Activated CD4-positive, alpha-beta T cell treated with anti-CD3 and anti-CD28 coated beads for 36 hours (primary cell): ENCODE measurements at regions of chrX and their contacts with region 1.

Region 1: GRCh38 chrX:130165703-130166502 is at the start of gene AIFM1:
- DNase-seq: peak; percentile 92
- ATAC-seq: peak; percentile 95
- H3K4me3 Mint-ChIP-seq: peak within 1 kb of the TSS; percentile 86
- H3K27ac Mint-ChIP-seq: peak within 1 kb of the TSS; percentile 89
- H3K4me1 Mint-ChIP-seq: peaks cover 37% of the 10 kb centered on the region
- H3K27me3 Mint-ChIP-seq: no peaks in the 10 kb centered on the region
- total RNA-seq, gene AIFM1: 48.8 to 61.7 TPM

Region 2: DNA sequence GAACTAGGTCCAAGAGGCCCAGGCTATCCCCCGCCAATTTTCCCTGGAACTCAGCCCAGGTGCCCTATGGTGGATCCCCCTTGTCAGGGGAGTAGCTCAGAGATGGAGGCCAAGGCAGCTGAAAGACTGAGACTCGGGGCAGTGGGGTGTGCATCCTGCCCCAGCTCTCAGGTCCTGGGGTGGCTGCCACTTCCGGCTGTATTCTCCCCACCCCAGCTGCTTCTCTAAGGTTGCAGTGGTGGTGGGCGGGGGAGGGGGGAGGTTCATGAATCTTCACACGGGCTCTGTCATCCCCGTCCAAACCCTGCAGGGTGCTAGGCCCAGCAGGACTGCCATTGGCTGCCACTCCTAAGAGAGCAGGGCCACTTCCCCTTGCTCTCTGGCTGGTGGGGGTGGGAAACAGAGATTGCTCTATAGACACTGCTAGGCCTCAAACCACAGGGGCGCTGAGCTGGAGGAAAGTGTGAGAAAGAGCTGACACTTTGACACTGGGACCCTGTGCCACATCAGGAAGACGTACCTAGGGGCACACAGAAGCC is 384.7 kb before region 1 on chrX:
- CTCF ChIA-PET with region 1: no interaction called
- POLR2A ChIA-PET with region 1: no interaction called
- intact Hi-C with region 1: loop called in 1 of 2 experiments (anchors 5 kb)
- DNase-seq: peak; percentile 91
- ATAC-seq: peak; percentile 80
- H3K4me3 Mint-ChIP-seq: peak overlapping the region; percentile 79
- H3K27ac Mint-ChIP-seq: peak overlapping the region; percentile 97
- H3K4me1 Mint-ChIP-seq: peaks cover 50% of the 10 kb centered on the region
- H3K27me3 Mint-ChIP-seq: no peaks in the 10 kb centered on the region

Region 3: DNA sequence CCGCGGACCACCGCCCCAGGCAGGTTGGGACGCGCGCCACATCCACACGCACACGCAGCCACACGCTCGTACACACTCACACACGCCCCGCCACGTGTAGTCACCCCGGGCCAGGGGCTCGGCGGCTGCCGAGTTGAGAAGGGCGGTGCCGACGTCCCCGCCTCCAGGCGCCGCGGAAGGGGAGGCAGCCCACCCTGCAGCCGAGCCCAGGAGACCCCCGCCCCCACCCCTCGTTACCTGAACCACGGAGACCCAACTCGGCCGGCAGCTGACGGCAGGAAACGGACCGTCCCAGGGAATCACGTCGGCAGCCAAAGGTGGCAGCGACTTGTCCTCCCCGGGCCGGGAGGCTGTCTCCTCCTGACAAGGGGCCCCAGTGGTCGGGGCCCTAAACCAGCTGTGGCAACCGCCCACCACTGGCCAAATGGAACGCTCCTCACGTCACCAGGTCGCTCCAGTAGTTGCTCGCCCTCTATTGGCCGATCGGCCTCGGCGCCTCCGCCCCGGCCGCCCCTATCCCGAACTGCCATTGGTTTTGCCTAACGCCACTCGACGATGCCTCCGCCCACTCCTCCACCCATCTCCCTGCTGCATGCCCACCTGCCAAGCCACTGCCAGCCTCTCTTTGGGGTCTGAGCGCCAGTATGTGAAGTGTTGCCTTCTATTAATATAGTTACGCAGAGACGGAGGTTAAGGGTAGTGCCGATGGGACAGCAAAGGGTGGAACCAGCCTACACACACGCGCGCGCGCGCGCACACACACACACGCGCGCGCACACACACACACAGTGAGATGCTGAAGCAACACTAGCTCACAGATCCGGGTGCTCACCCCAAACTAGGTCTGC is 322.2 kb before region 1 on chrX and contains the start of gene ZDHHC9:
- CTCF ChIA-PET with region 1: no interaction called
- POLR2A ChIA-PET with region 1: no interaction called
- intact Hi-C with region 1: loop called in 1 of 2 experiments (anchors 10 kb)
- DNase-seq: peak; percentile 92
- ATAC-seq: peak; percentile 97
- H3K4me3 Mint-ChIP-seq: peak within 1 kb of the TSS; percentile 77
- H3K27ac Mint-ChIP-seq: peak within 1 kb of the TSS; percentile 75
- H3K4me1 Mint-ChIP-seq: peaks cover 32% of the 10 kb centered on the region
- H3K27me3 Mint-ChIP-seq: no peaks in the 10 kb centered on the region
- total RNA-seq, gene ZDHHC9: 12.5 to 14.2 TPM

Region 4: GRCh38 chrX:129931411-129932015 is 234.4 kb before region 1 on chrX:
- CTCF ChIA-PET with region 1: no interaction called
- POLR2A ChIA-PET with region 1: no interaction called
- intact Hi-C with region 1: loop called in 1 of 2 experiments (anchors 5 kb)
- DNase-seq: peak; percentile 75
- ATAC-seq: peak; percentile 78
- H3K4me3 Mint-ChIP-seq: peak overlapping the region; percentile 62
- H3K27ac Mint-ChIP-seq: peak overlapping the region; percentile 73
- H3K4me1 Mint-ChIP-seq: peaks cover 4% of the 10 kb centered on the region
- H3K27me3 Mint-ChIP-seq: peaks cover 2% of the 10 kb centered on the region

Region 5: GRCh38 chrX:130060122-130061069 is 105.5 kb before region 1 on chrX:
- CTCF ChIA-PET with region 1: no interaction called
- POLR2A ChIA-PET with region 1: no interaction called
- intact Hi-C with region 1: no loop called
- DNase-seq: peak; percentile 90
- ATAC-seq: peak; percentile 91
- H3K4me3 Mint-ChIP-seq: peak overlapping the region; percentile 65
- H3K27ac Mint-ChIP-seq: peak overlapping the region; percentile 55
- H3K4me1 Mint-ChIP-seq: peaks cover 4% of the 10 kb centered on the region
- H3K27me3 Mint-ChIP-seq: no peaks in the 10 kb centered on the region

Region 6: GRCh38 chrX:130120746-130121504 is 45.0 kb before region 1 on chrX:
- CTCF ChIA-PET with region 1: interaction called, 5 read pairs
- POLR2A ChIA-PET with region 1: no interaction called
- intact Hi-C with region 1: loop called in 1 of 2 experiments (anchors 2 kb)
- DNase-seq: peak; percentile 81
- ATAC-seq: peak; percentile 88
- H3K4me3 Mint-ChIP-seq: peak overlapping the region; percentile 57
- H3K27ac Mint-ChIP-seq: peak overlapping the region; percentile 60
- H3K4me1 Mint-ChIP-seq: peaks cover 19% of the 10 kb centered on the region
- H3K27me3 Mint-ChIP-seq: no peaks in the 10 kb centered on the region

Region 7: GRCh38 chrX:130339408-130340222 is 173.7 kb after region 1 on chrX and contains the start of gene SLC25A14:
- CTCF ChIA-PET with region 1: no interaction called
- POLR2A ChIA-PET with region 1: no interaction called
- intact Hi-C with region 1: loop called in 1 of 2 experiments (anchors 5 kb)
- DNase-seq: peak; percentile 82
- ATAC-seq: peak; percentile 88
- H3K4me3 Mint-ChIP-seq: peak within 1 kb of the TSS; percentile 87
- H3K27ac Mint-ChIP-seq: peak within 1 kb of the TSS; percentile 94
- H3K4me1 Mint-ChIP-seq: peaks cover 14% of the 10 kb centered on the region
- H3K27me3 Mint-ChIP-seq: no peaks in the 10 kb centered on the region
- total RNA-seq, gene SLC25A14: 9.6 to 11.0 TPM

Region 8: GRCh38 chrX:130426531-130426930 is 260.6 kb after region 1 on chrX:
- CTCF ChIA-PET with region 1: no interaction called
- POLR2A ChIA-PET with region 1: no interaction called
- intact Hi-C with region 1: no loop called
- DNase-seq: no peak
- ATAC-seq: no peak
- H3K4me3 Mint-ChIP-seq: no peak overlapping the region
- H3K27ac Mint-ChIP-seq: no peak overlapping the region
- H3K4me1 Mint-ChIP-seq: no peaks in the 10 kb centered on the region
- H3K27me3 Mint-ChIP-seq: no peaks in the 10 kb centered on the region

Region 9: GRCh38 chrX:130902783-130903613 is 737.1 kb after region 1 on chrX and contains the start of gene ENOX2:
- CTCF ChIA-PET with region 1: no interaction called
- POLR2A ChIA-PET with region 1: no interaction called
- intact Hi-C with region 1: loop called in 1 of 2 experiments (anchors 5 kb)
- DNase-seq: peak; percentile 86
- ATAC-seq: peak; percentile 98
- H3K4me3 Mint-ChIP-seq: no peak within 1 kb of the TSS
- H3K27ac Mint-ChIP-seq: peak within 1 kb of the TSS; percentile 80
- H3K4me1 Mint-ChIP-seq: peaks cover 5% of the 10 kb centered on the region
- H3K27me3 Mint-ChIP-seq: peaks cover 2% of the 10 kb centered on the region
- total RNA-seq, gene ENOX2: 12.5 to 16.5 TPM